ENCODE measurements at regions of chr14 and their contacts with region 1.

Region 1: DNA sequence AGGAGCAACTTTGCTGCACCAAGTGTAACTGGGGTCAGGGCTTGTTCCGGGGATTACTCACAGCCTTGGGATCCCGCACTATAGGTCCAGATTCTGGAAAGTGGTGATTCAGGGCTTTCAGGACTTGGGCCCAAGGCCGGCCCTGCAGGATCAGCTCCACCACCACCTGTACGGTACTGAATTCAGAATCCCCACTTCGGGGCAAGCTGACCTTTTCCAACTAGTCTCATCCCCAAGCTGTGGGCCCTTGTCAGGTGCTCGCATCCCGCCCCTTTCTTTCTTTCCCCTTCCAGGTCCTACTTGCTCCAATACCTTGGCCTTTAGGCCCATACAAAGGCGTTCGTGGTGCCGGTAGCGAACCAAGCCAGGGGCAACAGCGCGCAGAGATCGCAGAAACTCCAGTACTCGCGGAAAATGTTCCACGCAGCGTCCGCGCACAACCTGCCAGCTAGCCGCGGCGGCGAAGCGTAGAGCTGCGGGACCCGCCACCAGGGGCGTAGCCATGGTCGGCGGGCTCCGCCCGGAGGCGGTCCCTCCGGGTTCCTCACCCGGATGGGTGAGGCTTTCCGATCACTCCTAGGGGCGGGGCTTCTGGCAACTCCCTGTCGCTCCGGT is 487 bp downstream of the TINF2 start:
- DNase-seq: peak; percentile 97
- ATAC-seq: peak; percentile 83
- H3K4me3 Mint-ChIP-seq: peak overlapping the region; percentile 94
- H3K27ac Mint-ChIP-seq: peak overlapping the region; percentile 99
- H3K4me1 Mint-ChIP-seq: peaks cover 55% of the 10 kb centered on the region
- H3K27me3 Mint-ChIP-seq: no peaks in the 10 kb centered on the region

Region 2: GRCh38 chr14:24123508-24124417 is 118.2 kb before region 1 on chr14:
- CTCF ChIA-PET with region 1: no interaction called
- POLR2A ChIA-PET with region 1: no interaction called
- intact Hi-C with region 1: no loop called
- DNase-seq: no peak
- ATAC-seq: no peak
- H3K4me3 Mint-ChIP-seq: no peak overlapping the region
- H3K27ac Mint-ChIP-seq: no peak overlapping the region
- H3K4me1 Mint-ChIP-seq: peaks cover 2% of the 10 kb centered on the region
- H3K27me3 Mint-ChIP-seq: no peaks in the 10 kb centered on the region

Region 3: DNA sequence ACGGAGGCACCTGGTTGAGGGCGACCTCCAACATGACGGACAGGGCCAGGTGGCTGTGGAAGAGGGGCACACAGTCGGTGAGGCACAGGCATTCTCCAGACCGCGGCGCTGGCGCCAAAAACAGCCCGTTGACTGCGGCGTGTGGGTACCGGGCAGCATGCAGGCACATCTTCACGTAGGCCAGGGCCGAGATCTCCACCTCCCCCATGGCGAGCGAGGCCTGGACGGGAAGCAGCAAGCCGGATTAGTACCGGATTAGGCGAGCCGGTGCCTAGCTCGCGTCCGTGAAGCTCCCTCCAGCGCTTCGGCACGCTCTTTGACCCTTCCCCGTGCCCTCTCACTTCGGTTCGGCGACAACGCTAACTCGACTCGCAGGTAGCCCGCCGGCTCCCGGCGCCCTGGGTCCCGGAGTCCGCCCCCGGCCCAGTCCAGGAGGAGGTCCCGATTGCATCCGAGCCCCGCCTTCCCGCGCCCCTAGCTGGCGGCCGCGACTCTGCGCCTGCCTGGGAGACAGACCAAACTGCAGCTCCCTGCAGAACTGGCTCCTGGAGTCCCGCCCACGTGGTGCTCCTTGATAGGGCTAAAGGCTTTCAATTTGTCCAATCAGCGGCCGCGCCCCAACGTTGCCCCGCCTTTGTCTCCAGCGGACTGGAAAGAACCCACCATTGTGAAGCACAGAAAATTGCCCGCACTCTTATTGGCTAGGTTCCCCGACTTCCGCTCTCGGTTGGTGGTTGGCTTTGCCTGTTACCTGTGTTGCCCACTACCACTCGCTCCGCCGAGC is 100.6 kb before region 1 on chr14 and contains the start of gene EMC9:
- CTCF ChIA-PET with region 1: interaction called, 5 read pairs
- POLR2A ChIA-PET with region 1: interaction called, 7 read pairs
- intact Hi-C with region 1: loop called in 1 of 2 experiments (anchors 1 kb)
- DNase-seq: peak; percentile 100
- ATAC-seq: peak; percentile 87
- H3K4me3 Mint-ChIP-seq: peak within 1 kb of the TSS; percentile 88
- H3K27ac Mint-ChIP-seq: peak within 1 kb of the TSS; percentile 97
- H3K4me1 Mint-ChIP-seq: peaks cover 66% of the 10 kb centered on the region
- H3K27me3 Mint-ChIP-seq: no peaks in the 10 kb centered on the region
- total RNA-seq, gene EMC9: 36.9 to 46.7 TPM

Region 4: DNA sequence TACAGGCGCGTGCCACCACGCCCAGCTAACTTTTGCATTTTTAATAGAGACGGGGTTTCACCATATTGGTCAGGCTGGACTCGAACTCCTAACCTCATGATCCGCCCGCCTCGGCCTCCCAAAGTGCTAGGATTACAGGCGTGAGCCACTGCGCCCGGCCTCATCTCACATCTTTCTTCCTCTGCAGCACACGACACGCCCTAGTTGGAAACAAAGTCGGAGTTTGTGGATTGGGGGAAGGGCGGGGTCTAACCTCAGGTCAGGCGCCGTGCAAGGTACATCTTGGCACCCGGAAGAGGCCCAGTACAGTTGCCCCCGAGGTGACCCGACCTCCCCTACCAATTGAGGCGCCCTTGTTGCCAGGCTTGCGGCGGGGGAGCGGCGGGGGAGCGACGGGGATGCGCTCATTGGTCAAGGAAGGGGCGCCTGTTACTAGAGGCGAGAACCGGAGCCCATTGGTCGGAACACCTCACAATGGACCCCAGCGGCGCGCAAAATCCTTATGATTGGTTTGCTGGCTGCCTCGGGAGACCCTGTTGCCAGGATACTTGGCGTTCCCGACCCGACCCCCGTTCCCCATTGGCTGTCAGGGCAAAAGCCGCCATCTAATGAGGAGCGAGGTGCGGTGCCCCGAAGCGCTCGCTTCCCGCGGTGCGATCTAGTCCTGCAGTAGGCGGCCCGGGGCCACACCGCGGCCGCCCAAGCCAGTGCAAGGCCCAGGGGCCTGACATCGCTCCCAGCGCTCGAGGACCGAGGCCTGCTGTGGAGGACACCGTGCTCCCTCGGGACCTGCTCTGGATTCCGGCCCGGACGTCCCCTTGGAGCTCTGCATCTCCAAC is 70.3 kb before region 1 on chr14 and contains the start of gene REC8:
- CTCF ChIA-PET with region 1: no interaction called
- POLR2A ChIA-PET with region 1: interaction called, 11 read pairs
- intact Hi-C with region 1: no loop called
- DNase-seq: peak; percentile 75
- ATAC-seq: peak; percentile 81
- H3K4me3 Mint-ChIP-seq: peak within 1 kb of the TSS; percentile 66
- H3K27ac Mint-ChIP-seq: peak within 1 kb of the TSS; percentile 69
- H3K4me1 Mint-ChIP-seq: peaks cover 31% of the 10 kb centered on the region
- H3K27me3 Mint-ChIP-seq: no peaks in the 10 kb centered on the region
- total RNA-seq, gene REC8: 25.6 to 27.7 TPM

Region 5: GRCh38 chr14:24195191-24196070 is 46.5 kb before region 1 on chr14 and contains the start of gene TM9SF1:
- CTCF ChIA-PET with region 1: interaction called, 5 read pairs
- POLR2A ChIA-PET with region 1: interaction called, 7 read pairs
- intact Hi-C with region 1: loop called in 1 of 2 experiments (anchors 1 kb)
- DNase-seq: peak; percentile 93
- ATAC-seq: peak; percentile 93
- H3K4me3 Mint-ChIP-seq: peak within 1 kb of the TSS; percentile 90
- H3K27ac Mint-ChIP-seq: peak within 1 kb of the TSS; percentile 93
- H3K4me1 Mint-ChIP-seq: peaks cover 50% of the 10 kb centered on the region
- H3K27me3 Mint-ChIP-seq: no peaks in the 10 kb centered on the region
- total RNA-seq, gene TM9SF1: 17.0 to 24.4 TPM

Region 6: DNA sequence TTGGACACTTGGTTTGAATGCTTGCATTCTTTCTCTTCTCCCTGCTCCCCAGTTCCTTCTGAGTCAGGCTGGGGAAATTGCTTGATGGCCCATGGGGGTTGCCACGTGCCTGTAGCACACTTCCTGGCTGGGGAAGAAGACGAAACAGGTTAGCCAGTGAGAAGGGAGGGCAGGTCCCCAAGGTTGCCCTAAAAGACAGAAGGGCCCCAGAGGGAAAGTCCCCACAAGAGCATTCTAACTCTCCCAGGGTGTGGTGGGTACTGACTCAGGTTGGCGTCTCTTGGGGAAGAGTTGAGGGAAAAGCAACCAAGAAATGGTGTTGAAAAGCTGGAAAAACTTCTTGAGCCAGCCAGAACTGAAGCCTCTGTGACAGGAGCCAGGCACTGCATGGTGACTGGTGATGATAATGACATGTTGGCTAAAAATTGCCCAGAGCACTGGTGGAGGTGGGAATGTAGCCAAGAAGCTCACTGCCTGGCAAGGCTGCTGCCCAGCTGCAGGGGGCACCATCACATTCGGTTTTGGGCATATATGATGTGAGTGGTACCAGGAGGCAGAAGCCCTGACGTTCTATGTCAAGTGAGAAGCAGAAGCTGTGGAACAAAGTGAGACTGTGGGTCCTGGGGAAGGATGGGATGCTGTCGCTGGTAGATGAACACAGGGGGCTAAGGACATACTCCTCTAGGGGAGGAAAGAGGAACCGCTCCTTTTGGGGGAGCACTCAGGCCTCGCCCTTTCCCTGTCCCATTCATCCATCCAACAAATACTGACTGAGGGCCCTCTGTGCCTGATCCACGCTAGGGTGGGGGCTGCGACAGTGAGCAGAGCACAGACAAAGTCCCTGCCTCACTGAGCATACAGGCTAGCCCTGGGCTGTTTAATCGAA is 37.6 kb after region 1 on chr14:
- CTCF ChIA-PET with region 1: interaction called, 22 read pairs
- POLR2A ChIA-PET with region 1: interaction called, 4 read pairs
- intact Hi-C with region 1: no loop called
- DNase-seq: peak; percentile 80
- ATAC-seq: peak; percentile 90
- H3K4me3 Mint-ChIP-seq: peak overlapping the region; percentile 34
- H3K27ac Mint-ChIP-seq: peak overlapping the region; percentile 89
- H3K4me1 Mint-ChIP-seq: peaks cover 52% of the 10 kb centered on the region
- H3K27me3 Mint-ChIP-seq: no peaks in the 10 kb centered on the region

Region 7: DNA sequence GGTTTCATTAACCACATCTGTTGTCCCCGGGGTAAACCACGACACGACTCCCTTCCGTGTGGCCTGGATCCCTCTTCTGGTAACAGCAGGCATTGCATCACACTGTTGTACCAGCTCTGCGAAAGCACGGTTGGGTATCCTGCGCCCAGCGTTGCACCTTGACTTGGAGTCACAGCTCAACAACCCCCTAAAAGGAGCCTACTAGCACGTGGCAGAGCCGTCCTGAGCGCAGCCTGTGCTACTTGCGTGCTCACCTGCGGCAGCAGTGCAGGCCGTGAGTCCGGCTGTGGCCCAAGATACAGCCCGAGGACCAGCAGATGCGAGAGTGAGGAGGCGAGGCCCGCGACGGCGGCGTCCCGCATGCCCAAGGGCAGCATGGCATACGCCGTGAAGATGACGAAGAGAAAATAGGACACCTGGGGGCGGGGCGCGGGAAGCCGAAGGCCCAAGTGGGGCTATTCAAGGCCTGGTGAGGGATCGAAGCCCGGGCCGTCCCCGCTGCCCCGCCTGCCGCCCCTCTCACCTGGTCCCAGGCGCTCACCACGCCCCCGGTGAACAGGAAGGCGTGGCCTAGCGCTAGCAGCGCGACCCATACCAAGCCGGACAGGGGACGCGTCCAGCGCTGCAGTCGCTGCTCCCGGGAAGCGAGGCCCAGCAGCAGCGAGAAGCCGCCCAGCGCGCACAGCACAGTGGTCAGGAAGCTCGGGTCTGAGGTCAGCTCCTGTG is 90.5 kb after region 1 on chr14:
- CTCF ChIA-PET with region 1: interaction called, 13 read pairs
- POLR2A ChIA-PET with region 1: interaction called, 3 read pairs
- intact Hi-C with region 1: loop called in 1 of 2 experiments (anchors 1 kb)
- DNase-seq: peak; percentile 91
- ATAC-seq: peak; percentile 82
- H3K4me3 Mint-ChIP-seq: peak overlapping the region; percentile 53
- H3K27ac Mint-ChIP-seq: peak overlapping the region; percentile 29
- H3K4me1 Mint-ChIP-seq: peaks cover 27% of the 10 kb centered on the region
- H3K27me3 Mint-ChIP-seq: peaks cover 24% of the 10 kb centered on the region

Region 8: DNA sequence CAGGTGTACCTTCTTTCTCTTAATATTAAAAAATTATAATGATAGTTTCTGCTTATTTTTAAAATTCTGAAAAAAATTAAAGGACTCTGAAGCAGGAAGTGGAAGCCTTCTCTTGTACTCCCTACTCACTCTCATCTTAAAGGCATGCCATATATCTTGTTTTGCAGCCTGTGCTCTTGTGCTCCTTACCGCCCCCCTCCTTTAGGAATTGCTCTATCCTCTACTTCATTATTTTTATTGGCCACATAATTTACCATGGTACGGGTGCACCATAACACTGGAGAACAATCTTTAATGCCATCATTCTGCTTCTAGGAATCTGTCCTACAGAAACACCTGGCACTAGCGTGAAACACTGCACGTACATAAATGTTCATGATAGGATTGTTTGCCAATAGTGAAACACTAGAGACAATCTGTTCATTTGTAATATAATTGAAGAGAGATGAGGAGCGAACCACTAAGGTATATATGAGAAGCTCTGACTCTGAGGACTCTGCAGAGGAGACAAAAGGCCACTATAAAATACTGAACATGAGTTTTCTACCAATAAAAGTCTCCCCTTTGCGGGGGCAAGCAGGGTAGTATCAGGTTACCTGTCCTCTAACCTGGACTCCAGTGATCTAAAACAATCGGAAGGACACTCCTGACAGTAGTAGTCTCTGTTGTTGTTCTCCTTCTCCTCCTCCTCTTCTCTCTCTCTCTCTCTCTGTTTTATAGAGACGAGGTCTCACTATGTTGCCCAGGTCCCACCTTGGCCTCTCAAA is 150.6 kb after region 1 on chr14:
- CTCF ChIA-PET with region 1: no interaction called
- POLR2A ChIA-PET with region 1: no interaction called
- intact Hi-C with region 1: no loop called
- DNase-seq: no peak
- ATAC-seq: no peak
- H3K4me3 Mint-ChIP-seq: no peak overlapping the region
- H3K27ac Mint-ChIP-seq: no peak overlapping the region
- H3K4me1 Mint-ChIP-seq: no peaks in the 10 kb centered on the region
- H3K27me3 Mint-ChIP-seq: peaks cover 10% of the 10 kb centered on the region

Region 9: DNA sequence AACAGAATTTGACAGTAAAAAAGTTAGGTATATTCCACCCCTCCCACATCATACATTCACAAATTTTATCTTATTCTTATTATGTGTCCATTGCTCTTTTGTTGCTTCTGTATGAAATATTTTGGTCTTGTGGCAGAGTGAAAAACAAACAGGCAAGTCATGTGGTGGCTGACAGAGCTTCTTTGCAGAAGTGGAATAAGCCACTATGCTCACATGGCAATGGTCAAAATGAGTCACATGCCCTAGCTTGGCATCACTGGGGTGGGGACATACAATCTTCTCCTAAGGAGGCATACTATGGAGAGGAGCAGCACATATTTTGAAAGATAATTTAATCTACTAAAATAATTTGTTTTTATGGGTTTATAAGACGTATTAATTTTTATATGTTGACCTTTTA is 293.8 kb after region 1 on chr14:
- CTCF ChIA-PET with region 1: no interaction called
- POLR2A ChIA-PET with region 1: no interaction called
- intact Hi-C with region 1: no loop called
- DNase-seq: peak; percentile 31
- ATAC-seq: peak; percentile 72
- H3K4me3 Mint-ChIP-seq: no peak overlapping the region
- H3K27ac Mint-ChIP-seq: no peak overlapping the region
- H3K4me1 Mint-ChIP-seq: peaks cover 2% of the 10 kb centered on the region
- H3K27me3 Mint-ChIP-seq: peaks cover 15% of the 10 kb centered on the region

Region 10: DNA sequence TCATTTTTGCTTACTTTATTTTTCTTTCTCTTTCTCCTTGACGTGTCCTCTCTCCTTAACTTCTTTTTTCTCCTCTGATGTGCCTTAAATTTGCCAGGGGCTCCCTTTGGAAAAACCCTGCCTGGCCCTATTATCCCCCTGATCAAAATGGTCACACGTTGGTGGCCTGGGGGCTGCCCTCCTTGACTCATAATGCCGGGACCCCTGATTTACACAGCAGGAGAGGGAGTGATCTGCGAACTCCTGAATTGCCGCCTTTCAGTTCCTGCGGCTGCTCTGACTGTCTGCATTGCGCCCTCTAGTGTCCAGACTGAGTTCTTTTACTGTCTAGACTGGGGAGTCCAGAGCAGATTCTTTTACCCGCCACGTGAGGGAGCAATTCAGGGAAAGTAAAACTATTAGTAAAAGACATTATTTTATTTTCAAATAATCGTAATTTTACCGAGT is 436.9 kb after region 1 on chr14:
- CTCF ChIA-PET with region 1: no interaction called
- POLR2A ChIA-PET with region 1: no interaction called
- intact Hi-C with region 1: loop called in 1 of 2 experiments (anchors 10 kb)
- DNase-seq: peak; percentile 87
- ATAC-seq: peak; percentile 66
- H3K4me3 Mint-ChIP-seq: peak overlapping the region; percentile 69
- H3K27ac Mint-ChIP-seq: peak overlapping the region; percentile 95
- H3K4me1 Mint-ChIP-seq: peaks cover 61% of the 10 kb centered on the region
- H3K27me3 Mint-ChIP-seq: peaks cover 4% of the 10 kb centered on the region

Measured in activated CD4-positive, alpha-beta T cell treated with anti-CD3 and anti-CD28 coated beads for 36 hours (primary cell).